CD4-positive, alpha-beta T cell (primary cell): ENCODE measurements at regions of chr4 and their contacts with region 1.

Region 1: GRCh38 chr4:48851651-48852050 is 20.8 kb downstream of the OCIAD1 start:
- DNase-seq: no peak
- ATAC-seq: no peak
- H3K4me3 ChIP-seq: no peak overlapping the region
- H3K4me3 Mint-ChIP-seq: no peak overlapping the region
- H3K27ac ChIP-seq: no peak overlapping the region
- H3K27ac Mint-ChIP-seq: peak overlapping the region; percentile 4
- H3K4me1 ChIP-seq: no peaks in the 10 kb centered on the region
- H3K4me1 Mint-ChIP-seq: no peaks in the 10 kb centered on the region
- H3K27me3 ChIP-seq: no peaks in the 10 kb centered on the region
- H3K27me3 Mint-ChIP-seq: no peaks in the 10 kb centered on the region
- CTCF ChIP-seq: no peak

Region 2: DNA sequence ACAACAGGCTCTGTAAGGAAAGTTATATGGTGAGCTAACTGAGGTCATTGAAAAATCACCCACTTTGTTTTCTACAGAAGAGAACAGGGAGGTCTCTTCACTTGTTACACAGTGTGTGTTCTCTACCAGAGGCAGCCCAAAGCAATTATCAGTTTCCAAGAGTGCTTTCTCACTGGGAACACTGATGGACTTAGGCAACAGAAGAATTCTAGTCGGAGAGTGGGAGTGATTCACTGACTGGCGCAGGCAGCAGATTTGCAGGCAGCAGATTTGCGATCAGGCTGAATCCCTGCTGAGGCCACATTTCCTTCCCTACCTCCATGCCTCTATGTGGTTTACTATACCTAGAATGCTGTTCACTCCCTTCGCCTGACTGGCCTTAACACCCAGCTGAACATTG is 48.3 kb after region 1 on chr4:
- CTCF ChIA-PET with region 1: no interaction called
- POLR2A ChIA-PET with region 1: no interaction called
- intact Hi-C with region 1: loop called (anchors 5 kb)
- DNase-seq: no peak
- ATAC-seq: no peak
- H3K4me3 ChIP-seq: no peak overlapping the region
- H3K4me3 Mint-ChIP-seq: no peak overlapping the region
- H3K27ac ChIP-seq: no peak overlapping the region
- H3K27ac Mint-ChIP-seq: peak overlapping the region; percentile 5
- H3K4me1 ChIP-seq: peaks cover 12% of the 10 kb centered on the region
- H3K4me1 Mint-ChIP-seq: peaks cover 61% of the 10 kb centered on the region
- H3K27me3 ChIP-seq: no peaks in the 10 kb centered on the region
- H3K27me3 Mint-ChIP-seq: no peaks in the 10 kb centered on the region
- CTCF ChIP-seq: no peak